Activated CD8-positive, alpha-beta T cell treated with anti-CD3 and anti-CD28 coated beads, Interleukin-2, amount 10 ng/mL, durations not matched to agents 7 days and 5 days (primary cell): ENCODE measurements at regions of chr7 and their contacts with region 1.

Region 1: DNA sequence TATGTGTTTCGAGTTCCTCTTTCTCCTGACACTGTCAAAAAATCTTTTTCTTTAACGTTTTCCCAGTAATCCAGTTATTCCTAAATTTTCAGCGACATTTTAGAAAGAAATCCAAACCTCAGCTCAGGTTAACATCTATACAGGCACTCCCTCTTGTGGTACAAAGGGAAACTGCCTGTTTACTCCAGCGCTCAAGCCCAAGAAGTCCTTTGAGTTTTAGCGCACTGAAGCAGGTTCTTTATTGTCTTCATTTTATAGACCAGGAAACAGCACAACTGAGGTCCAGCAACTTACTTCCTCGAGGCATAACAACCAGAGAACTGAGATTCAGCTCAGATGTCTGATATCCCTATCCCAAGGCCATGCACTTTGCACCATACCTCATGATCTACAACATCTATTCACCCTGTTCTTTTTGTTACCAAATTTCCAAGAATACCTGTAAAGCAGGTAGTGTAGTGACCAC is 287.2 kb upstream of the MKLN1 start:
- DNase-seq: peak; percentile 73
- ATAC-seq: peak; percentile 64
- H3K4me3 Mint-ChIP-seq: no peak overlapping the region
- H3K27ac Mint-ChIP-seq: no peak overlapping the region
- H3K4me1 Mint-ChIP-seq: peaks cover 27% of the 10 kb centered on the region
- H3K27me3 Mint-ChIP-seq: no peaks in the 10 kb centered on the region

Region 2: GRCh38 chr7:130896898-130897514 is 143.5 kb before region 1 on chr7:
- CTCF ChIA-PET with region 1: interaction called, 127 read pairs
- POLR2A ChIA-PET with region 1: interaction called, 5 read pairs
- DNase-seq: peak; percentile 79
- ATAC-seq: peak; percentile 80
- H3K4me3 Mint-ChIP-seq: no peak overlapping the region
- H3K27ac Mint-ChIP-seq: peak overlapping the region; percentile 68
- H3K4me1 Mint-ChIP-seq: peaks cover 73% of the 10 kb centered on the region
- H3K27me3 Mint-ChIP-seq: no peaks in the 10 kb centered on the region

Region 3: DNA sequence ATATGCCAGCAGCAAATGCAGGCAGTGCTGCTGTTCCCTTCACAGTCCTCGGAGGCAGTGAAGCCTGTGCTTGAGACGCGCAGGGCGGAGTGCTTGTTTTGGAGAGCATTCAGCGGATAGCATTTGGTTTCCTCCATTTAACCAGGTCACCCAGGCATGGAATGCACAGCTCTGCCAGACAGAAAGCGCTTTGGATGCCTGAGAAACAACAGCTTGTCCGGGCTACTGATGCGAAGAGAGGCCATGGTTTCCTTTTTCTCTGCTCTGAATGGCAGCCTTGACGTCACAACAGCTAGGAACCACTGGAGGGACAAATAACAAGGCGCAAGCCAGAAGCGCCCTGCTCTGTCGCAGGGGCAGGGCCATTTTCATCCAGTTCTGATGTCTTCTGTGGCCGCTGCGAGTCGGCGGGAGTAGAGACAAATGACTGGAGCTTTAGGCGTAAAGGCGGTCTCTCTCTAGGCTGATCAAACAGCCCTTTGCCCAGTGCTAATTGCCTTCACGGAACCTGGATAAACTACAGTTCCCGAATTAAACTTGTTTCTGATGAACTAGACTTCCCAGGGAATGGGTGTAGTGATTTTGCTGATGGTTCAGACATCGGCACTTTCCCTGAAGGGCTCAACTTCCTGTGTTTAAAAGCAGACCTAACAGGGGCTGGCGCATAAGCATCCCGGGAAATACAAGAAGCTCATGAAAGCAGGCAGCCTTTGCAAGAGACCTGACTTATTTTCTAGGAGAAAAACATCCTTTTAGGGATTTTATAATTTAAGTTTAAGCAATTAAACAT is 118.9 kb before region 1 on chr7:
- CTCF ChIA-PET with region 1: interaction called, 15 read pairs
- POLR2A ChIA-PET with region 1: no interaction called
- DNase-seq: peak; percentile 17
- ATAC-seq: no peak
- H3K4me3 Mint-ChIP-seq: no peak overlapping the region
- H3K27ac Mint-ChIP-seq: no peak overlapping the region
- H3K4me1 Mint-ChIP-seq: peaks cover 82% of the 10 kb centered on the region
- H3K27me3 Mint-ChIP-seq: no peaks in the 10 kb centered on the region

Region 4: DNA sequence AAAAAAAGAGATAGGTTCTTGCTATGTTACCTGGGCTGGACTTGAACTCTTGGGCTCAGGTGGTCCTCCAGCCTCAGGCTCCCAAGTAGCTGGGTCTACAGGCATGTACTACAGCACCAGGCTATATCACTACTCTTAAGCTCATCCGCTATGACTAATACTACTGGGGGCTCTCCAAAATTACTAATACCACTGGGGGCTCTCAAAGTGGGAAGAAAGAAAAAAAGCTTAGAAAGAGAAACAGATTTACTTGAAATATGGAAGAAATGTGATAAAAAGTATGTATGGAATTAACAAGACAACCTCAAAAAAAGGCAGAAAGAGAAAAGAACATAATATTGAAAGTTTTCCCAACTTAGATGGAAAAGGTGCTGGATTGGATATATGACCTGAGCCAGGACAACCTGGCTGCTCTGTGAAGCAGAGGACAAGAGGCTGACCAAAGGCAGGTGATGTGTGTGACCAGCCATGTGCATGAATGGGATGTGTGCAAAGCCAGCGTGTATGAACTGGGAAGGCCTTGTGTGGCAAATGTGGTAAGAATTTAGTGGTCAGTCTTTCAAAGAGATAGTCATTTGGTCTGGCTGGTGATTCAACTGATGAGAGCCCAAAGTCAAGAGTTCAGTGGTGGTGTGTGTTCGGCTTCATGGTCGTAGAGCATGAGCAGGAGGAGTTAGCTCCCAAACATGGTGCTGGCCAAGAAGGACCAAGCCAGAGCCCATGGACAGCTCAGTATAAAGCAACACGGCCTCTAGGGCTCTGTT is 74.1 kb before region 1 on chr7:
- CTCF ChIA-PET with region 1: interaction called, 18 read pairs
- POLR2A ChIA-PET with region 1: interaction called, 3 read pairs
- DNase-seq: no peak
- ATAC-seq: peak; percentile 23
- H3K4me3 Mint-ChIP-seq: no peak overlapping the region
- H3K27ac Mint-ChIP-seq: peak overlapping the region; percentile 5
- H3K4me1 Mint-ChIP-seq: peaks cover 61% of the 10 kb centered on the region
- H3K27me3 Mint-ChIP-seq: no peaks in the 10 kb centered on the region

Region 5: DNA sequence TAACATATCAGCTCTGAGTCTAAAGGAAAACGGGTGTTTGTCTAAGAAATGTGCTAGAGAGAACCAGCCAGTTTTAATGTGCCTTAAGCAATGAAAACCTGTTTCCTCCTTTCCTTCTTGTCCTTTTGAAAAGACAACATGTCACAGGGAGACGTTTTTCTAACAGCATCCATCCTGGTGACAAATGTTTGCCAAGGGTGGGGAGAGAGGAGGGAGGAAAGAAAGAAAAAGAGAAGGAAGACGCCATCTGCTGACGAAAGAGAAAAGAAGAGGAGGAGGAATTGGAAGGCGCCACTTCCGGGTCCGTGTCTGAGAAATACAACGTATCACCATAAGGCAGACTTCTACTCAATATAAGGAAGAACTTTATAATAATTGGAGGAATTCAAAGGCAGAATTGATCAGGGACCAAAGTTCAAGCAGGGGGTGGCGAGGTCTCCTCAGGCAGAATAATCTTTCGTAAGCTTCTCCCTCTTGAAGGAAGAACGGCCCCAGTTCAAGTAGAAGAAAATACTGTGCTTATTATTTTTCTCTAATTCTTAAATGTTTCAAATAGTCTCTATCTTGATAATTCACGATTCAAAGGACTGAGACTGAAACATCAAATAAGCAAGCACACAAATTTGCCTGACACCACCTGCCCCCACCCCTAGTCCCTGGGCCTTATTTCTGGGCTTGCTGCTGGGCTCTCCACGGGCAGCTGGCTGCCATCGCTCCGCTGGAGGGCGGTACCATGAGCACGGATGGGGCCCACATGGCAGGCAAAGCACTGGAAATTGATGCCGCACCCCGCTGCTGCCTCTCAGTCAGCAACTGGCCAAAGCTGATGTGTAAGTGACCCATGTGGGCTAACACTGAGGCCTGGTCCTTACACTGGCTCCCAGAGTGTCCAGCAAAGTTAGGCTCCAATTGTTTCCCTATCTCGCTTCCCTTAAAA is 32.8 kb before region 1 on chr7:
- CTCF ChIA-PET with region 1: interaction called, 19 read pairs
- POLR2A ChIA-PET with region 1: no interaction called
- DNase-seq: peak; percentile 82
- ATAC-seq: peak; percentile 70
- H3K4me3 Mint-ChIP-seq: peak overlapping the region; percentile 69
- H3K27ac Mint-ChIP-seq: peak overlapping the region; percentile 94
- H3K4me1 Mint-ChIP-seq: peaks cover 63% of the 10 kb centered on the region
- H3K27me3 Mint-ChIP-seq: no peaks in the 10 kb centered on the region

Region 6: GRCh38 chr7:131057015-131057793 is 16.7 kb after region 1 on chr7:
- CTCF ChIA-PET with region 1: interaction called, 36 read pairs
- POLR2A ChIA-PET with region 1: no interaction called
- DNase-seq: peak; percentile 62
- ATAC-seq: peak; percentile 66
- H3K4me3 Mint-ChIP-seq: peak overlapping the region; percentile 70
- H3K27ac Mint-ChIP-seq: peak overlapping the region; percentile 95
- H3K4me1 Mint-ChIP-seq: peaks cover 57% of the 10 kb centered on the region
- H3K27me3 Mint-ChIP-seq: no peaks in the 10 kb centered on the region

Region 7: GRCh38 chr7:131182446-131183058 is 142.1 kb after region 1 on chr7:
- CTCF ChIA-PET with region 1: no interaction called
- POLR2A ChIA-PET with region 1: no interaction called
- DNase-seq: no peak
- ATAC-seq: no peak
- H3K4me3 Mint-ChIP-seq: no peak overlapping the region
- H3K27ac Mint-ChIP-seq: no peak overlapping the region
- H3K4me1 Mint-ChIP-seq: peaks cover 23% of the 10 kb centered on the region
- H3K27me3 Mint-ChIP-seq: no peaks in the 10 kb centered on the region